ENCODE measurements at regions of chr6 and their contacts with region 1.

Region 1: GRCh38 chr6:111200350-111201243 is 113.3 kb downstream of the SLC16A10 start:
- DNase-seq: no peak
- ATAC-seq: no peak

Region 2: DNA sequence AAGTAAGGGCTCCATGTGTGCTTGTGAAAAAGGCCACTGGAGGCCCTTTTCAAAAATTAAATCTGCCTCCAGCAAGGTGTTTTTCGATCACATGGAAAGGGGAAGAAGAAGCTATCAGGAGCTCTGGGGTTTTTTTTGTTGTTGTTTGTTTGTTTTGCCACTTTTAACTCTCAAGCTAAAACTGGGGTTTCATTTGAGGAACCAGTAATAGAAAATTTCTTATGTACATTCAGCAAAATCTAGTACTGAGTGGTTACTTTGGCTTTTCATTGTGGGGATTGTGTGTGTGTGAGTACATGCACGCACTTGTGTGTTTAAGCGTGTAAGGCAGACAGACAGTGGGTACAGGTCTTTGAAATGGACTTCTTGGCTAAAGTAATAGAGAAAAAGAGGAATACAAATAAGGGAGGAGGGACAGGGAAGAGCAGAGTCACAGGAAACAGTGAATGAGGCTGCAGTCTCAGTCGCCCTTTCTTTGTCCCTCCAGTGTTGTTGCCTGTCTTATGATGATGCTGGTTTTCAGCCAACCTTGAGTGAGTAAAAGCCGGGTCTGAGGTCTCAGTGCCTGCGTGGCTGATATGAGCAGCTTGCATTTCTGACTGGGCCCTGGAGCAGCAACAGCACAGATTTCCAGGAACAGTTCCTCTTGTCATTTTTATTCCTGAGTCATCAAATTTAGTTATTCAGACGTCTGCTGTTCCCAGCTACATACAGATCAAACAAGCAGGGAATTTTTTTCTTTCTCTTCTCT is 87.1 kb before region 1 on chr6:
- intact Hi-C with region 1: loop called (anchors 5 kb)
- DNase-seq: no peak
- ATAC-seq: peak; percentile 82

Region 3: DNA sequence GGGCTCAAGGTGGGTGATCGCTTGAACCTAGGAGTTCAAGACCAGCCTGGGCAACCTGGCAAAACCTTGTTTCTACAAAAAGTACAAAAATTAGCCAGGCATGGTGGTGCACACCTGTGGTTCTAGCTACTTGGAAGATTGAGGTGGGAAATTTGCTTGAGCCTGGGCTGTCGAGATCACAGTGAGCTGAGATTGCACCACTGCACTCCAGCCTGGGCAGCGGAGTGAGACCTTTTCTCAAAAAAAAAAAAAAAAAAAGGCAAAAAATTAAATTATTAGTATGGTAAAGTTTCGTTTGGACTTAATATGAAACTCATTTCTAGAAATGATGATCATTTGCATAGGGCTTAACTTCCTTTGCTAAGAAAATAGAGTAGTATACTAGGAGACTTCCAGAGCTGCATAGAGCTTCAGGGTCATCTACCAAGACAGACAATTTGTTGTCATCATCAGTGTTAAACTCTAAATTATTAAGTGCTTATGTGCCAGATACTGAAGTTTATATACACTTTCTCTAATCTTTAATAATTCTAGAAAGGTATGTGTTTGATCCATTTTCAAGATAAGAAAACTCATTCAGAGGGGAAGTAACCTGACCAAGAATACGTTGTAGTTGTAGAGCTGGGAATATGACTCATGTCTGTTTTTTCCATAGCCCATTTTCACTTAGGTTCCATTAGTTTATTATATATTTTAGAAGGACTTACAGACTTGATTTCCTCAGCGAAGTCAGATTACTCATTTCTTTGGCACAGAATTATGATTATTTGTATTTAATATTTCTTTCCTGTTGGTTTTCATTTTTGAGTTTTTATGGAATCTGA is 28.8 kb before region 1 on chr6:
- intact Hi-C with region 1: no loop called
- DNase-seq: no peak
- ATAC-seq: no peak